ENCODE measurements at regions of chr3 and their contacts with region 1.

Region 1: DNA sequence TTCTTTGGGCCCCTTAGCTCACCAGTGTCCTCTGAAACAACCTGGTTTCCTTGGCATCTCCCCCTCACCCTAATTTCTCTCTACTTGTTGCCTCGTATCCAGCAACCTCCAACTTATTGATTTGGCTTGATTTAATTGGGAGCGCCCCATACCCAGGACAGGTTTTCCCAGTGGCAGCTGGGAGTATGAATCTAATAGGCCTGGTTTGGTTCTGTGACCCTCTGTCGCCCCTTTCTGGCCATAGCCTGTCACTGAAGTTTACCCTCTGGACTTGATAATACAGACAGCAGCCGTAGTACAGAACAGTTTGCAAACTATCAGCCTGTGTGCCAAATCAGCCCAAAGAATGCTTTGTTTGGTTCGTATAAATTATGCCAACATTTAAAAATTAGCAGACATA is 525.1 kb upstream of the GOLIM4 start:
- DNase-seq: no peak
- ATAC-seq: peak; percentile 90
- H3K4me3 ChIP-seq: no peak overlapping the region
- H3K27ac ChIP-seq: no peak overlapping the region
- H3K4me1 ChIP-seq: no peaks in the 10 kb centered on the region
- H3K27me3 ChIP-seq: no peaks in the 10 kb centered on the region
- CTCF ChIP-seq: peak; percentile 55 to 77 (median 61)
- EP300 ChIP-seq: no peak
- POLR2A ChIP-seq: no peak
- RAD21 ChIP-seq: peak; percentile 66

Region 2: DNA sequence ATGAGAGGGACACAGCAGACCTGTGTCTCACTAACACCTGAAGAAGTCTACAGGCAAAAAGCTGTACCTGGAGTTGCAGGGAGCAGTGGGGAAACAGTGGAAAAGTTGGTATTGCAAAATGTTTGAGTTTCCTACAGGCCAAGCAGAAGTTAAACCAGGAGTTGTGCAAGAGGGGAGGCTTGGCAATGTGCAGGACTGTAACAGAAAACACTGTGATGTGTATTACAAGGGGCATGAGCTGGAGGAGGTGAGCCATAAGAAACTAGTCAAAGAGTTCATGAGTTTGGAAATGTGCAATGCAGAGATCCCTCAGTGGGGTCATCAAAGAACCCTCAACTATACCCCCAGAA is 1099.8 kb before region 1 on chr3:
- CTCF ChIA-PET with region 1: no interaction called
- POLR2A ChIA-PET with region 1: no interaction called
- RAD21 ChIA-PET with region 1: no interaction called
- SMC1A ChIA-PET with region 1: no interaction called
- in situ Hi-C with region 1: no loop called
- intact Hi-C with region 1: no loop called
- DNase-seq: no peak
- ATAC-seq: no peak
- H3K4me3 ChIP-seq: no peak overlapping the region
- H3K27ac ChIP-seq: no peak overlapping the region
- H3K4me1 ChIP-seq: no peaks in the 10 kb centered on the region
- H3K27me3 ChIP-seq: no peaks in the 10 kb centered on the region
- CTCF ChIP-seq: no peak
- EP300 ChIP-seq: no peak
- POLR2A ChIP-seq: no peak
- RAD21 ChIP-seq: no peak

Region 3: GRCh38 chr3:168213920-168214319 is 406.9 kb before region 1 on chr3:
- CTCF ChIA-PET with region 1: interaction called, 79 read pairs
- POLR2A ChIA-PET with region 1: no interaction called
- RAD21 ChIA-PET with region 1: interaction called, 27 read pairs
- SMC1A ChIA-PET with region 1: interaction called, 20 read pairs
- in situ Hi-C with region 1: loop called (anchors 5 kb)
- intact Hi-C with region 1: loop called (anchors 2 kb)
- DNase-seq: peak; percentile 17
- ATAC-seq: peak; percentile 93
- H3K4me3 ChIP-seq: no peak overlapping the region; the same call in 1 of the 2 replicates
- H3K27ac ChIP-seq: no peak overlapping the region; the same call in 1 of the 2 replicates
- H3K4me1 ChIP-seq: peaks cover 3% of the 10 kb centered on the region; the same call in 1 of the 2 replicates
- H3K27me3 ChIP-seq: no peaks in the 10 kb centered on the region
- CTCF ChIP-seq: no peak
- EP300 ChIP-seq: no peak
- POLR2A ChIP-seq: no peak
- RAD21 ChIP-seq: no peak

Region 4: DNA sequence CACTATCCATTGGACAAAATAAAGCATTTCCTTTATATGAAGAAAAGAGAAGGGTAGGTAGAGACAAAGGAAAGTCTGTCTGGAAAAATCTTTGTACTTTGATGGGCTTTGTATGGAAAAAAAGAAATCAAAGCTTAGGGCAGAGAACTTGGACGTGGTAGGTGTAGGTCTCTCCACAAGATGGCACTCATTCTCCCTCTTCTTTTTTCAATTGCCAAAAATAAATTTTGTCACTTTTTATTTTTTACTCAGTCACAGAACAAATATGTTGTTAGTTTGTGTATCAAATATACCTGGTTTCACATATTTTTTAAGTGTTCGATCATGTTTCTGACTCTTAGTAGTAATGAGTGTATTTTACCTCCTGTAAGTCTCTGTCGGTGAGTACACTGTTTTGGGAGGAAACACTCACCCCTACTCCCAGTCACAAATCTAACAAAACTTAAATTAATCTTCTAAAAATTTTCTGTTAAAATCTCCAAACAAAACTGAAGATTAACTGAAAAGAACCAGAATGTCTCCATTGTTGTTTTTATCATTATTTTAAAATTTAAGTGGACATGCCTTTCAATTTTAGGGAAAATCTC is 109.3 kb before region 1 on chr3:
- CTCF ChIA-PET with region 1: interaction called, 66 read pairs
- POLR2A ChIA-PET with region 1: interaction called, 3 read pairs
- RAD21 ChIA-PET with region 1: interaction called, 37 read pairs
- SMC1A ChIA-PET with region 1: interaction called, 29 read pairs
- in situ Hi-C with region 1: loop called (anchors 5 kb)
- intact Hi-C with region 1: loop called (anchors 1 kb)
- DNase-seq: no peak
- ATAC-seq: peak; percentile 50; the same call in 2 of the 3 replicates
- H3K4me3 ChIP-seq: no peak overlapping the region
- H3K27ac ChIP-seq: no peak overlapping the region
- H3K4me1 ChIP-seq: no peaks in the 10 kb centered on the region
- H3K27me3 ChIP-seq: no peaks in the 10 kb centered on the region
- CTCF ChIP-seq: peak; percentile 47 to 58 (median 49)
- EP300 ChIP-seq: no peak
- POLR2A ChIP-seq: no peak
- RAD21 ChIP-seq: peak; percentile 47

Region 5: GRCh38 chr3:168517249-168518071 is 103.4 kb before region 1 on chr3:
- CTCF ChIA-PET with region 1: interaction called, 30 read pairs
- POLR2A ChIA-PET with region 1: interaction called, 3 read pairs
- RAD21 ChIA-PET with region 1: interaction called, 8 read pairs
- SMC1A ChIA-PET with region 1: interaction called, 15 read pairs
- in situ Hi-C with region 1: loop called (anchors 5 kb)
- intact Hi-C with region 1: no loop called
- DNase-seq: peak; percentile 41
- ATAC-seq: peak; percentile 84
- H3K4me3 ChIP-seq: no peak overlapping the region
- H3K27ac ChIP-seq: 0 out of 2 replicates have a peak overlapping the region, but pooled peaks have one; percentile 2
- H3K4me1 ChIP-seq: no peaks in the 10 kb centered on the region
- H3K27me3 ChIP-seq: no peaks in the 10 kb centered on the region
- CTCF ChIP-seq: no peak
- EP300 ChIP-seq: peak; percentile 48 to 87; a peak in 2 of 4 replicates
- POLR2A ChIP-seq: no peak
- RAD21 ChIP-seq: no peak

Region 6: GRCh38 chr3:168545591-168545990 is 75.2 kb before region 1 on chr3:
- CTCF ChIA-PET with region 1: interaction called, 7 read pairs
- POLR2A ChIA-PET with region 1: no interaction called
- RAD21 ChIA-PET with region 1: interaction called, 3 read pairs
- SMC1A ChIA-PET with region 1: interaction called, 10 read pairs
- in situ Hi-C with region 1: no loop called
- intact Hi-C with region 1: no loop called
- DNase-seq: no peak
- ATAC-seq: peak; percentile 36
- H3K4me3 ChIP-seq: no peak overlapping the region
- H3K27ac ChIP-seq: no peak overlapping the region
- H3K4me1 ChIP-seq: no peaks in the 10 kb centered on the region
- H3K27me3 ChIP-seq: no peaks in the 10 kb centered on the region
- CTCF ChIP-seq: no peak
- EP300 ChIP-seq: no peak
- POLR2A ChIP-seq: no peak
- RAD21 ChIP-seq: no peak

Region 7: GRCh38 chr3:168604767-168605166 is 16.1 kb before region 1 on chr3:
- CTCF ChIA-PET with region 1: interaction called, 16 read pairs
- POLR2A ChIA-PET with region 1: interaction called, 5 read pairs
- RAD21 ChIA-PET with region 1: interaction called, 4 read pairs
- SMC1A ChIA-PET with region 1: interaction called, 16 read pairs
- in situ Hi-C with region 1: no loop called
- intact Hi-C with region 1: no loop called
- DNase-seq: no peak
- ATAC-seq: peak; percentile 69
- H3K4me3 ChIP-seq: no peak overlapping the region
- H3K27ac ChIP-seq: no peak overlapping the region
- H3K4me1 ChIP-seq: no peaks in the 10 kb centered on the region
- H3K27me3 ChIP-seq: no peaks in the 10 kb centered on the region
- CTCF ChIP-seq: no peak
- EP300 ChIP-seq: no peak
- POLR2A ChIP-seq: no peak
- RAD21 ChIP-seq: no peak

Region 8: GRCh38 chr3:168722091-168722490 is 101.3 kb after region 1 on chr3:
- CTCF ChIA-PET with region 1: no interaction called
- POLR2A ChIA-PET with region 1: no interaction called
- RAD21 ChIA-PET with region 1: no interaction called
- SMC1A ChIA-PET with region 1: no interaction called
- in situ Hi-C with region 1: no loop called
- intact Hi-C with region 1: no loop called
- DNase-seq: no peak
- ATAC-seq: no peak
- H3K4me3 ChIP-seq: no peak overlapping the region
- H3K27ac ChIP-seq: no peak overlapping the region
- H3K4me1 ChIP-seq: no peaks in the 10 kb centered on the region
- H3K27me3 ChIP-seq: no peaks in the 10 kb centered on the region
- CTCF ChIP-seq: no peak
- EP300 ChIP-seq: no peak
- POLR2A ChIP-seq: no peak
- RAD21 ChIP-seq: no peak

Region 9: GRCh38 chr3:168847291-168847883 is 226.6 kb after region 1 on chr3:
- CTCF ChIA-PET with region 1: interaction called, 22 read pairs
- POLR2A ChIA-PET with region 1: no interaction called
- RAD21 ChIA-PET with region 1: interaction called, 7 read pairs
- SMC1A ChIA-PET with region 1: interaction called, 12 read pairs
- in situ Hi-C with region 1: no loop called
- intact Hi-C with region 1: loop called (anchors 2 kb)
- DNase-seq: peak; percentile 12
- ATAC-seq: peak; percentile 77
- H3K4me3 ChIP-seq: no peak overlapping the region
- H3K27ac ChIP-seq: no peak overlapping the region
- H3K4me1 ChIP-seq: no peaks in the 10 kb centered on the region
- H3K27me3 ChIP-seq: no peaks in the 10 kb centered on the region
- CTCF ChIP-seq: peak; percentile 41 to 76 (median 46); a peak in 5 of 6 replicates
- EP300 ChIP-seq: no peak
- POLR2A ChIP-seq: no peak
- RAD21 ChIP-seq: peak; percentile 79

Measured in GM12878 (cell line).